ENCODE measurements at regions of chr1 and their contacts with region 1.

Region 1: DNA sequence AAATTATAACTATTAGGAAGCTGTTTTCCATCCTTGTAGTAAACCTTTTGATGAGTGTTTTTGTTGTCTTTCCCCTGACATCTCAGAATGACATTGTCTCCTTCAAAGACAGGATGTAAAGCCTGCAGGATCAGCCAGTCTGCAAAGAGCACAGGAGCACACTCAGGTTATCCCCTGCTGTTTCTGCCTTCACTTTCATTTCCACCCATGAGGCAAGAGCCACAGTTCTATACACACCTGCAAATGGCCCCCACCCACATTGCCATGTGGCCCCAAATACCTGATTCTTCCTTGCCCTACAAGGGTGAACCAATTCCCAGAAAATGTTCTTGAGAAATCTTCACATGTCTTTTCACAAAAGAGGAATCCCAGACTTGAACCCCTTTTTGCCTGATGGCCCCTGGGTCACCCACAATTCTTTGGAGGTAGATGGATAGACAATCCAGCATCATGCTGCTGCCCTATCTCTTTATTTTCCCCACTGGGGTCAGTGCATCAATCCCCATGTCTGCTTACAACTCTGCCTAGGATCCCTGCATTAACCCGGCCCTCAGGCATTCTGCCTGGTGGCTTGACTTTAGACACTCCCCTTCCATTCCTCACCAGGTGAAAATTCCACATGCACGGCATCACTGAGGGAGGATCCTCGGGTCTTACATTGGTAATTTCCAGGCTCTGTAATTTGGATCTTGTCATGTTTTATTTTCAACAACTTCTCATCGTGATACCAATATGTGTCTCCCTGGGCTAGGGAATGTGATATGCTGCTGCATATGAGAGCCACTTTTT is 2.6 kb downstream of the FCRL3 start:
- DNase-seq: no peak
- H3K4me3 ChIP-seq: no peak overlapping the region
- H3K27ac ChIP-seq: no peak overlapping the region
- H3K4me1 ChIP-seq: no peaks in the 10 kb centered on the region
- H3K27me3 ChIP-seq: peaks cover 35% of the 10 kb centered on the region
- CTCF ChIP-seq: no peak

Region 2: DNA sequence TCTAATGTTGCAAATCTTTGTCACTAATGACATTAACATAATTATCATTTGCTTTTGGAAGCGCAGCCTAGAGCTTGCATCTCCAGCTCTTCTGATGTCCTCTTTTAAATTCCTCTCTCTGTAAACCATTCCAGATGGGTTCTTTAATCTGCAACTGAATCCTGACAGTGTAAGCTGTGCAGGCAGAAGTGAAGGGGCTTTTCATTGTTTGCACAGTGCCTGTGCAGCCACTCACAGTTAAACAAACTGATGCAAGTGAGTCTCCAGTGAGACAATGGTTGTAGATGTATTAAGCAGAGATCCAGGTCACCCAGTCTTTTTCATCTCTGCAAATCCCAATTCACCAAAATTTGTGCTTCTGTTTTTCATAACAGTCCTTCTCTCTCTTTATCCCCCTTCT is 123.1 kb before region 1 on chr1:
- CTCF ChIA-PET with region 1: interaction called, 8 read pairs
- POLR2A ChIA-PET with region 1: interaction called, 11 read pairs
- intact Hi-C with region 1: no loop called
- DNase-seq: no peak
- H3K4me3 ChIP-seq: no peak overlapping the region
- H3K27ac ChIP-seq: no peak overlapping the region
- H3K4me1 ChIP-seq: no peaks in the 10 kb centered on the region
- H3K27me3 ChIP-seq: peaks cover 8% of the 10 kb centered on the region
- CTCF ChIP-seq: no peak

Region 3: DNA sequence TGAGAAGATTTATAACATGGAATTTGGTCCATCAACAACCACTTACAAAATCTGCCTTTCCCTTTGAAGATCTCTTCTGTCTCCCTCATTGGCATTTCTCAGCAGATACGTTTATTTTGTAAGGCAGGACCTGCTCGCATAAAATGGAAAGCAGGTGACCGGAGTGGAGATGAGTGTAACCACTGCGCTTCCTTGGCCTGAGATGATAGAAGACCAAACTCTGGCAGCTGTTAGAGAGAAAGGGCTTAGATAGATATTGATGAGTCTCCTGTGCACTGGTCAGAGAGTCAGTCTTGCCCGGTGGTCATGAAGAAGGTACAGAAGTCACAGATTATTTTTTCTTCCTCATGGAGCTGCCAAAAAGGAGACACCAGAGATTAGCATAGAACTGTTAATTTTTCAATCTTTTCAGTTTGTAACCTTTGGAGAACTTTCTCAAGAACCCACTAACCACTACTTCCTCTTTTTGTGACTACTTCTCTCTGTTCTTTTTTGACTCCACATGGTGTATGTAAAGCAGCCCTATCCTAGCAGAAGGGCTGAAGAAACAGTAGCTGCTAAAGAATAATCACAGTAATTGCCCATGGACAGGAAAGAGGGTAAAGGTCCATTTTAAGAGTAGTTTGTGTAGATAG is 45.0 kb before region 1 on chr1:
- CTCF ChIA-PET with region 1: no interaction called
- POLR2A ChIA-PET with region 1: no interaction called
- intact Hi-C with region 1: loop called (anchors 1 kb)
- DNase-seq: no peak
- H3K4me3 ChIP-seq: no peak overlapping the region
- H3K27ac ChIP-seq: no peak overlapping the region
- H3K4me1 ChIP-seq: no peaks in the 10 kb centered on the region
- H3K27me3 ChIP-seq: peaks cover 43% of the 10 kb centered on the region
- CTCF ChIP-seq: no peak

Region 4: DNA sequence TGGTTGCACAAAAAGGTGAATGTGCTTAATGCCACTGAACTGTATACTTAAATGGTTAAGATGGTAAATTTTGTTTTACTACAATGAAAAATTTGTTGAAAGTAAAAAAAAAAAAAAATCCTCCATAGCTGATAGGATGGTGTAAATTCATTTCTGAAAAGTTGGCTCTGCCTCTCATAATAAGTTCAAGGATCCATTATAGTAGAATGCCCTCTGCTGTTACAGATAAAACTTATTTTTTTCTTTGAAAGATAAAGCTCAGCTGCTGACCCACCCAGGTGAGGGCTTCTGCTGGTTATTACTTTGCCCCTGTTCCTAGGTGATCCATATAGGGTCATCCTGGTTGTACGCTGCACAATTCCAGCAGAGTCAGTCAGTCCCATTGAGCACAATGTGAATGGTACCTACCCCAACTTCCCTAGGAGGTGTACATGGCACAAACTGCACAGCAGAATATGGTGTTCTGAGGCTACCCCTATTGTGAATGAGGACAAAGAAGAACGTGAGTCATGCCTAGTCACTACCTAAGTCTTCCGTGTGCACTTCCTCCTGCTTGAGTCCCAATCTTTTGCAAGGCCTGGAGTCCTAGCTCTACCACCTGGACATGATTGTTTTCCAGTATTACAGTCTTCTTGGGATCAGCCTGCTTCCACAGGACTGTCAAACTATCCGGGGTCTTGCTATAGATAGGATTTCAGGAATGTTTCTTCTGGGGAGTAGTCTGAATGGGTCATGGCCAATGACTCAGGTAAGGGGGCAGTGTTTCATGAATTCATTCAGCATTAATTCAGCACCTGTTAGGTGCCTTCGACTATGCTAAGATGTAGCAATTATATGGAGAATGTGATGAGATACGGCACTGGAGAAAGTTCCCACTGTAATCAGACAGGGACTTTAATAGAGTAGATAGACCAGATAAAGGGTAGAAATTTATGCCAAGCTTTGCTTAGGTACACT is 164.4 kb after region 1 on chr1:
- CTCF ChIA-PET with region 1: no interaction called
- POLR2A ChIA-PET with region 1: no interaction called
- intact Hi-C with region 1: no loop called
- DNase-seq: no peak
- H3K4me3 ChIP-seq: no peak overlapping the region
- H3K27ac ChIP-seq: no peak overlapping the region
- H3K4me1 ChIP-seq: no peaks in the 10 kb centered on the region
- H3K27me3 ChIP-seq: peaks cover 54% of the 10 kb centered on the region
- CTCF ChIP-seq: no peak

Measured in A673 (cell line).